Spleen (tissue), 13 donors: ENCODE measurements at regions of chr1 and their contacts with region 1.

Region 1: DNA sequence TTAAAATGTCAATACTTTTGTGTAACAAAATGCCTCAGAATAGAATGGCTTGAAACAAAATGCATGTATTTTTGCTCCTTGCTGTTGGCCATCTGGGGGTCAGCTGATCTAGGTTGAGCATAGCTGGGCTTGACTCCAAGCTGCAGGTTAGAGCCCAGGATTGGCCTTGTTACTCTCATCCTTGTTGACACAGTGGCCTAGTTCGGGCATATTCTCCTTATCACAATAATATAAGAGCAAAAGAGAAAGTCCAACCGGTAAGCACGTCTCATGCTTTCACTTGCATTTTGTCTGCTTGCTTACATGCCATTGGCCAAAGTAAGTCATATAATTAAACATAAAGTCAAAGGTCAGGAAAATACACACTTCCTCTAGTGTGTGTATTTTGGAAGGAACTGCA is 456.2 kb downstream of the KCNT2 start:
- DNase-seq: no peak
- H3K4me3 ChIP-seq: no peak overlapping the region
- H3K27ac ChIP-seq: no peak overlapping the region
- H3K4me1 ChIP-seq: no peaks in the 10 kb centered on the region
- H3K27me3 ChIP-seq: no peaks in the 10 kb centered on the region
- CTCF ChIP-seq: no peak
- POLR2A ChIP-seq: no peak

Region 2: DNA sequence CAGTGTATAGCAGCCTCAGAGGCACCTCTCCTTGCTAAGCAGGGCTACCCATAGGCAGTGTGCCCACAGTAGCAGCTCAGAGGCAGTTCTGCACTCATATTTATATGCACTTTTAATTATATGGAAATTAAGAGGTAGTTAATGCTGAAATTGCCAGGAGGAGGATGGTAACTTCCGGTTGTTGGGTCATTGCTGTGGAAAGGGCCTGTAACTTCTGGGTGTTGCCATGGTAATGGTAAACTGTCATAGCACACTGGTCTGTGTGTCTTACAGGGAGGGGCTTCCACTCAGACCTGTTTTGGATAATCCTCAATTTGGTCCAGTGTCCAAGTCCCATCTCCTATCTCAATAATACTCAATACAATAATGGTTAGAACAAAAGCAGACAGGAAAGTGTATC is 507.4 kb after region 1 on chr1:
- intact Hi-C with region 1: loop called (anchors 5 kb)
- DNase-seq: no peak
- H3K4me3 ChIP-seq: no peak overlapping the region
- H3K27ac ChIP-seq: no peak overlapping the region
- H3K4me1 ChIP-seq: peaks cover 0 to 13% (median 4%) of the 10 kb centered on the region in 6 donors
- H3K27me3 ChIP-seq: no peaks in the 10 kb centered on the region
- CTCF ChIP-seq: no peak
- POLR2A ChIP-seq: no peak